Right ventricle myocardium inferior (tissue), 1 donor: ENCODE measurements at regions of chr5 and their contacts with region 1.

Region 1: DNA sequence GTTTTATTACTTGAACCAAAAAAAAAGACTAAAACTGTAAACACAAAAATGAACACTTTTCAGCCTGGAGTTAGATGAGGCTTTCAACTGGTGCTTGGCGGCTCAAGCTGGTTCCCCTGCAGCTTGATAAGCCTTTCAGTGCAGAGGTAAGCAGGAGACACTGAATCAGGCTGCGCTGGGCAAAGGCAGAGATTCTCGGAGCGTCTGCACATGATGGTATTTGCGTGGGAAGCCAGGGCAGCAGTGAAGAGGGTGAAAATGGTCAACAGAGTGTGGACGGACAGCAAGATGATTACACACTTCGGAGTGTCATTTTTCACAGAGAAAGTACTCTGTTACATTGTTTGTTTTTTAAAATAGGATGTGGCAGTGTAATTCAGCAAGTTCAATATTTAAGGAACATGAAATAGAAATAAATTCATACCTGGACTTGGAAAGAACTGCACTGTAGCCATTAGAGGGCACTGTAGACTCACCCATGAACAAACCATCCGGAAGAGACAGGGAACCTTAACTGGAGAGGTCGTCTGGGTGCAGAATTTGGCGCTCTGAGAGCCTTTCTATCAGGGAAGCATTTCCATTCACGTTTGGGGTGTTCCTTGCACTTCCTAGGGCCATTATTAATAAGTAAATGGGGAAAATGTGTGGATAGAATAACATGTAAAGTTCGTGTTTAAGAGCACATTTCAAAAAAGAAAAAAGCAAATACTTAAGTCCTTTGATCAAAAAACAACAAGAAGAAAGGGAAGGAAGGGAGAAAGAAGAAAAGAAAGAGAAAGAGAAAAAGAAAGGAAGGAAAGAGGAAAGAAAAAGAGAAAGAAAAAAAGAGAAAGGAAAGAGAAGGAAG is 69.8 kb downstream of the ICE1 start:
- DNase-seq: no peak
- ATAC-seq: peak; percentile 38

Region 2: GRCh38 chr5:5454391-5454790 is 37.9 kb before region 1 on chr5:
- intact Hi-C with region 1: no loop called
- DNase-seq: no peak
- ATAC-seq: no peak

Region 3: GRCh38 chr5:5699062-5699461 is 206.8 kb after region 1 on chr5:
- intact Hi-C with region 1: no loop called
- DNase-seq: no peak
- ATAC-seq: no peak

Region 4: DNA sequence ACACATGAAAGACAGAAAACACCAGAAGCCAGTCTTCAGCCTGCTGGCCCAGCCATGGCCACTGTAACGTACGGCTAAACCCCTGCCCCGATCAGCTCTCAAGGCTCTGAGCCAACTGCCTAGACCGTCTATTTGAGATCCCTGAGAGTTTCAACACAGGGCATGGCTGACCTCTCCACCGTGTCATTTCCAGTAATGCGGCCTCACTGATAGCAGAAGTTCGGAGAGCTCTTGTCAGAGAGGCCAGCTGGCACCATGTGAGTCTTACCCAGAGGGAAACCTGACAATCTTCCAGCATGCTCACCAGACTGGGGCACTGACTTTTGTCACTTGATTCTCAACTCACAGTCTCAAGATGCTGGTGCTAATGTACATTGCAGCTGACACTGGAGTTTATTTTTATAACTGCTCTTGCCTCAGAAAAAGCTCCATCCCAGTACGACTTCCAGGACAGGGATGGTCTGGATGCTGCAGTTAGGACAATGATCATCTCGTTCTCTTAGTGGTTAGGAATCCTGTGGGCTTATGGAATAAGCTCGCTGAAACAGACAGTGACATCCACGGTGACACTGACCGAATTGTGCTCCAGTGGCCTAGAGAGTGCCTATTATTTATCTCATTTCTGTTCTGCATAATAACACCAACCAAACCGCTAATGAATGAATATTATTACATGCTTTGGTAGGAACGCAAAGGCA is 302.9 kb after region 1 on chr5:
- intact Hi-C with region 1: loop called (anchors 10 kb)
- DNase-seq: peak; percentile 72
- ATAC-seq: peak; percentile 97

Region 5: DNA sequence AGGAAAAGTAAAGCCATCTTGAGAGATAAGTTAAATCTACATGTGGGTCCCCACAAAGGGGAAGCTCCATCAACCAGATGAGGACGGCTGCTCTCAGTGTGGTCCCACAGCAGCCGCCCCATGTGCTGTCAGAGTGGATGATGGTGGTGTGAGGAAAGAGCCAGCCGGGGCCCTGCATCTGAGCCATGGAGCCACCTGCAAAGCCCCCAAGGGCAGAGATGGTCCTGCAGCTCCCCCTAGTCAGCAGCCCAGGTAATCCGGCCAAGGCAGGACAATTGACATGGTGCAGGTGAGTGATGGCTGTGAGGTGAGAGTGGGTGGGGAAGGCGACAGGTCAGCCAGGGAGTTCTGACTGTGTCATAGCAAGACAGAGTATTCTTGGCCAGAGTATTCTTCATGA is 389.0 kb after region 1 on chr5:
- intact Hi-C with region 1: loop called (anchors 1 kb)
- DNase-seq: no peak
- ATAC-seq: no peak

Region 6: GRCh38 chr5:6273090-6273735 is 780.9 kb after region 1 on chr5:
- intact Hi-C with region 1: loop called (anchors 10 kb)
- DNase-seq: no peak
- ATAC-seq: no peak

Region 7: GRCh38 chr5:6448622-6449464 is 956.5 kb after region 1 on chr5 and contains the start of gene UBE2QL1:
- intact Hi-C with region 1: loop called (anchors 5 kb)
- DNase-seq: no peak
- ATAC-seq: peak; percentile 43
- total RNA-seq, gene UBE2QL1: 21.9 TPM

Region 8: DNA sequence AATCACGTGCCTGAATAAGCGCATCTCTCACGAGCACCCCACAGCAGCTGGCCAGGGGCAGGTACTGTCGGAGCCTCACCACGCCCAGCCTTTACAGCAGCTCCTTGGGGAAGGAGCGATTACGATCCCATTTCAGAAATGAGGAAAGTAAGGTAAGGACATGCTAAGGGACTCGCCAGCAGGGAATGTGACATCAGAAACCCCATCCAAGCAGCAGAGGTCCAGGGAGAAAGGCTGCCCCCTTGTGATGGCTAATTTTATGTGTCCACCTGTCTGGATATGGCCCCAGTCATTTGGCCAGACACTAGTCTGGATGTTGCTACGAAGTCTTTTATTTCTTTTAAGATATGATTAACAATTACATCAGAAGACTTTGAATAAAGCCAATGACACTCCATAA is 1033.6 kb after region 1 on chr5:
- intact Hi-C with region 1: loop called (anchors 10 kb)
- DNase-seq: no peak
- ATAC-seq: peak; percentile 61

Region 9: GRCh38 chr5:6583049-6583880 is 1091.0 kb after region 1 on chr5:
- intact Hi-C with region 1: loop called (anchors 5 kb)
- DNase-seq: no peak
- ATAC-seq: peak; percentile 91